Psoas muscle (tissue), 8 donors: ENCODE measurements at regions of chr18 and their contacts with region 1.

Region 1: GRCh38 chr18:22250591-22250996 is 81.2 kb downstream of the GATA6 start:
- DNase-seq: no peak
- ATAC-seq: no peak
- H3K4me3 ChIP-seq: no peak overlapping the region
- H3K27ac ChIP-seq: no peak overlapping the region
- H3K4me1 ChIP-seq: no peaks in the 10 kb centered on the region
- H3K27me3 ChIP-seq: peaks cover 0 to 7% (median 0%) of the 10 kb centered on the region in 3 donors
- CTCF ChIP-seq: no peak

Region 2: GRCh38 chr18:22286621-22287020 is 36.0 kb after region 1 on chr18:
- intact Hi-C with region 1: loop called in 1 of 2 experiments (anchors 5 kb)
- DNase-seq: no peak
- ATAC-seq: no peak
- H3K4me3 ChIP-seq: no peak overlapping the region
- H3K27ac ChIP-seq: no peak overlapping the region
- H3K4me1 ChIP-seq: no peaks in the 10 kb centered on the region
- H3K27me3 ChIP-seq: no peaks in the 10 kb centered on the region
- CTCF ChIP-seq: no peak